ENCODE measurements at regions of chr2 and their contacts with region 1.

Region 1: GRCh38 chr2:41947701-41948396 is 100.0 kb upstream of the PKDCC start:
- DNase-seq: peak in 1 of 2 experiments; percentile 66
- H3K4me3 ChIP-seq: peak overlapping the region in 2 of 4 experiments; percentile 24 to 36; a peak in 4 of 8 replicates
- H3K27ac ChIP-seq: peak overlapping the region; percentile 51; the same call in 1 of the 2 replicates
- H3K4me1 ChIP-seq: peaks cover 19 to 31% (median 23%) of the 10 kb centered on the region in 4 experiments; a peak in 6 of 7 replicates
- H3K27me3 ChIP-seq: no peaks in the 10 kb centered on the region
- CTCF ChIP-seq: no peak
- EP300 ChIP-seq: no peak
- POLR2A ChIP-seq: no peak
- RAD21 ChIP-seq: peak in 1 of 2 experiments; percentile 4; a peak in 1 of 4 replicates

Region 2: GRCh38 chr2:41937464-41937906 is 10.4 kb before region 1 on chr2:
- CTCF ChIA-PET with region 1: interaction called, 29 read pairs
- POLR2A ChIA-PET with region 1: interaction called, 47 read pairs
- DNase-seq: peak in 1 of 2 experiments; percentile 58
- H3K4me3 ChIP-seq: peak overlapping the region in 1 of 4 experiments; percentile 23; a peak in 1 of 8 replicates
- H3K27ac ChIP-seq: peak overlapping the region; percentile 27; the same call in 1 of the 2 replicates
- H3K4me1 ChIP-seq: peaks cover 10 to 33% (median 26%) of the 10 kb centered on the region in 4 experiments
- H3K27me3 ChIP-seq: no peaks in the 10 kb centered on the region; a peak in 1 of 7 replicates
- CTCF ChIP-seq: peak in 2 of 3 experiments; percentile 4 to 19; a peak in 2 of 4 replicates
- EP300 ChIP-seq: no peak
- POLR2A ChIP-seq: no peak
- RAD21 ChIP-seq: peak; percentile 7 to 28; a peak in 3 of 4 replicates

Region 3: DNA sequence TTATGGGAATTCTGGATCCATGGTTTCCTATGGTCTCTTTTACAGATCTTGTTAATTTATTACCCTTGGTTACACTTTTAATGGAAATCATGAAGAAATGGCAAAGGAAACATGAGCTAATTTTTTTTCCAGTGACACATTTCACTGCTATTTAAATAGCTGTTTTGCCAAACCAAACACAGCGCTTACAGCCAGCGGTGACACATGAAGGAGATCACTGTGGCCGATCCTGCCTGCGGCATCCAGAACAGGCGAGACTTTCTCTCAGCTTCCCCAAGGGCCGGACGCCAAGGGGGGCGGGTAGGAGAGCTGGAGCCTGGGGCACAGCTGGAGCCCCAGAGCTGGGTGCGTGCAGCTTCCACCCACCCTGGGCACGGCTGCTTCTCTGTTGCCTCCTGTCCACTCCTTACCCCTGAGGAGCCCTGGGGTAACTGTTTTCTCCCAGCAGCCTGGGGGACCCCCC is 18.6 kb after region 1 on chr2:
- CTCF ChIA-PET with region 1: interaction called, 3 read pairs
- POLR2A ChIA-PET with region 1: interaction called, 13 read pairs
- DNase-seq: no peak
- H3K4me3 ChIP-seq: no peak overlapping the region
- H3K27ac ChIP-seq: no peak overlapping the region
- H3K4me1 ChIP-seq: peaks cover 0 to 18% (median 11%) of the 10 kb centered on the region in 4 experiments
- H3K27me3 ChIP-seq: no peaks in the 10 kb centered on the region
- CTCF ChIP-seq: no peak
- EP300 ChIP-seq: no peak
- POLR2A ChIP-seq: no peak
- RAD21 ChIP-seq: no peak